ENCODE measurements at regions of chr16 and their contacts with region 1.

Region 1: GRCh38 chr16:19959736-19960135 is 75.1 kb upstream of the GPRC5B start:
- DNase-seq: no peak
- ATAC-seq: no peak
- H3K4me3 ChIP-seq: no peak overlapping the region
- H3K27ac ChIP-seq: no peak overlapping the region
- H3K4me1 ChIP-seq: no peaks in the 10 kb centered on the region
- H3K27me3 ChIP-seq: peaks cover 0 to 23% (median 3%) of the 10 kb centered on the region in 9 donors
- CTCF ChIP-seq: no peak
- POLR2A ChIP-seq: no peak

Region 2: DNA sequence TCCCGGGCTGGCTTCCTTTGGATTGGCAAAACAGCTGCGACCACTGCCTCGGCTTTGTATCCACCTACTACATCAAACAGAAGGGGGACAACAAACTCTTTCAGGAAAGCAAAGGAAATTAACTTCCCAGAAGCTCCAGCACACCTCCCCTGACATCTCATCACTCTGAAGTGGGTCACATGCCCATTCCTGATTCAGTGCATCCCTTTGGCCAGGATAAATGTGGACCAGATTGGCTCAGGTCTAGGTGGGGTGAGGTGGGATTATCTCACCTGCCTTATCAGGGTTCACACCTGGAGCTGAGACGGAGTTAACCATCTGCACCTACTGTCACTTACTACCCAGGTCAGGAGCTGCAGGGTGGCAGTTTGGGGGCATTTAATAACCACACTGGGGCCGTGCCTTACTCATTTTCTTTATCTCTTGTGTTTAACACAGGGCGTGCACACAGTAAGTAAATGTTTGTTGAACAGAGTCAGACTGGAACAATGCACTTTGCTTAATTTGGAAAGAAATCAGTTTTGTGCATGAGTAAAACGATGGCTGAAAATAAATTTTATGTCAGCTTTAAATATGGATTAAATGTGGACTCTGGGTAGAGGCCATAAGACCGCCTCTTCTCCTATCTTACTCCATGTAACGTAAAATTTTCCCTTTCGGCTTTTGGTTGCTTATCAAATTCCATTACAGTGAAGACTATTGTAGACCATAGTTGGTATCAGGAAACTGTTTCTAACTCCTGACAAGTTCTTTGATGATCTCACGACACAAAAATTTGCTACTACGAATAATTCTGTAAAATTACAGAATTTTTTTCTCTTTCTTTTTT is 205.7 kb before region 1 on chr16:
- intact Hi-C with region 1: no loop called
- DNase-seq: no peak
- ATAC-seq: peak in 3 of 4 donors; percentile 52 to 75 (median 63)
- H3K4me3 ChIP-seq: no peak overlapping the region
- H3K27ac ChIP-seq: peak overlapping the region in 11 of 12 donors; percentile 37 to 87 (median 71)
- H3K4me1 ChIP-seq: peaks cover 0 to 74% (median 40%) of the 10 kb centered on the region in 12 donors
- H3K27me3 ChIP-seq: no peaks in the 10 kb centered on the region
- CTCF ChIP-seq: no peak
- POLR2A ChIP-seq: no peak

Region 3: GRCh38 chr16:19933740-19934139 is 26.0 kb before region 1 on chr16:
- intact Hi-C with region 1: loop called in 3 of 10 experiments (anchors 1 to 2 kb)
- DNase-seq: no peak
- ATAC-seq: no peak
- H3K4me3 ChIP-seq: no peak overlapping the region
- H3K27ac ChIP-seq: no peak overlapping the region
- H3K4me1 ChIP-seq: no peaks in the 10 kb centered on the region
- H3K27me3 ChIP-seq: peaks cover 0 to 29% (median 0%) of the 10 kb centered on the region in 9 donors
- CTCF ChIP-seq: no peak
- POLR2A ChIP-seq: no peak

Region 4: GRCh38 chr16:20014034-20014433 is 54.3 kb after region 1 on chr16:
- intact Hi-C with region 1: loop called in 1 of 10 experiments (anchors 10 kb)
- DNase-seq: no peak
- ATAC-seq: no peak
- H3K4me3 ChIP-seq: no peak overlapping the region
- H3K27ac ChIP-seq: no peak overlapping the region
- H3K4me1 ChIP-seq: no peaks in the 10 kb centered on the region
- H3K27me3 ChIP-seq: peaks cover 0 to 20% (median 0%) of the 10 kb centered on the region in 9 donors
- CTCF ChIP-seq: no peak
- POLR2A ChIP-seq: no peak

Measured in heart left ventricle (tissue), 16 donors.